ENCODE measurements at regions of chr5 and their contacts with region 1.

Region 1: DNA sequence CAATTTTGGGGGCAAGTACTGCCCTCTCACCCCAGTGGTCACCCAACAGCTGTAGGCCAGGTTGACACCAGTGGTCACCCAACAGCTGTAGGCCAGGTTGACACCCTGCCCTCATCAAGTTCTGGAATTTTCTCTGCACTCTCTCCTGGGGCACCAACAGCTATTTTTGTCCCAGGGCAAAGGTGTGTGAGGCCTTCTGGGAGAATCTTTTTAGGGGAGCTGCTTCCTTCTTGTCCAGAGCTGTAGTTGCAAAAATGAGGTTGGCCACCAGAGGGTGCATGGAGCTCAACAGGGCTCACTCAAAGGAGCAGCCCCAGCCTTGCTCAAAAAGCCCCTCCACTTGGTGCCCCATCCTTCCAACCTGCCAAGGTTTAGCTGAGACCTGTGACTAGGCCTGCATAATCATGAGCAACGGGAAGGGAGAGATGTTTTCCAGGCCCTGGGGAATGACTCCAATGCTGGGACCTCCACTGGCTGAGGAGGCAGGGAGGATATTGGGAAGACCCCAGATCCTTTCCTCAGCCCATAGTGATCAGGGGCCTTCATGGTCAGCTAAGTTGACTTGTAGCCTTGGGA is 10.6 kb upstream of the P4HA2 start:
- DNase-seq: peak; percentile 76
- ATAC-seq: peak; percentile 77 to 81

Region 2: DNA sequence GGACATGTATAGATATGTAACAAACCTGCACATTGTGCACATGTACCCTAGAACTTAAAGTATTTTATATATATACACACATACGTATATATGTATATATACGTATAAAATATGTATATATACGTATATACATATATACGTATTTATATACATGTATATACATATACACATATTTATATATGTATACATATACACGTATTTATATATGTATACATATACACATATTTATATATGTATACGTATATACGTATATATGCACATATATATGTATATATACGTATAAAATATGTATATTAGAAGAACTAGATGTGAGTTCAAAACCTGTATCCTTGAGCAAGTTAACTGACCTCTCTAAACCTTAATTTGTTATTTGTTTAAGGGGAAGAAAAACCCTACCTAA is 502.9 kb before region 1 on chr5:
- intact Hi-C with region 1: no loop called
- DNase-seq: no peak
- ATAC-seq: no peak

Region 3: DNA sequence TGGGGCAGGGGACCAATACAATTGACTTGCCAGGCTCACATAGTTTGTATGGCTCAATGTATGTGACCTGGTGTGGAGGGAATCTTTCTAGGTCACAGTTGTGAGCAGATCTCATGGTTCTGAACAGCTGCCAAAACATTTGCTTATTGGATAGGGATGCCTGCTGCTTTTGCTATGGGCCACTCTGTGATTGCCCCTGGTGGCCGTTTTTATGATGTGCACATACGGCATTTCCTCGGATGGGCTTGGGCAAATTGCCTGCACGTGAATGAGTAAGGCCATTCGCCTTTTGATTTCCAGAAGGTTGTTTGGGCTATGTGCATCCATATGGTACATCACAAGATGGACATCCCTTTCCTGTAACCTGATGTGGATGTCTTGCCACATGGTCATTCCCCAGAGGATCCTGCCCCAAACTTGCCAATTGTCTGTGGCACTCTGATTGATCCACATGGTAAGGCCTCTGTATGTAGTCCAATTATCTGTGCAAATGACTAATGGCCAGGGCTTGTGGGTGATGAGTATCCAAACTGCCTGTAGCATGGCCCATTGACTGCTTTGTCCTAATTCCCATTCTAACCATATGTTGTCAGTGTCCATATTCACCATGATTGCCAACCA is 45.3 kb after region 1 on chr5:
- intact Hi-C with region 1: loop called in 1 of 2 experiments (anchors 10 kb)
- DNase-seq: no peak
- ATAC-seq: peak; percentile 22 to 68

Region 4: GRCh38 chr5:132704875-132705274 is 466.6 kb after region 1 on chr5:
- intact Hi-C with region 1: no loop called
- DNase-seq: no peak
- ATAC-seq: no peak